ENCODE measurements at regions of chr2 and their contacts with region 1.

Region 1: DNA sequence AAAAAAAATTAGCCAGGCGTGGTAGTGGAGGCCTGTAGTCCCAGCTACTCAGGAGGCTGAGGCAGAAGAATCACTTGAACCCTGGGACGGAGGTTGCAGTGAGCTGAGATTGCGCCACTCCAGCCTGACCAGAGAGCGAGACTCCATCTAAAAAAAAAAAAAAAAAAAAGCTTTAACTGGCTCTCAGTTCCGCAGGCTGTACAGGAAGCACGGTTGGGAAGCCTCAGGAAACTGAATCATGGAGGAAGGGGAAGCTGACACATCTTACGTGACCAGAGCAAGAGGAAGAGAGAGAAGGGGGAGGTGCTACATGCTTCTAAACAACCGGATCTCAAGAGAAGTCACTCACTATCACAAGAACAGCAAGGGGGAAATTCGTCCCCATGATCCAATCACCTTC is 505.6 kb upstream of the SLC8A1 start:
- DNase-seq: peak; percentile 71
- ATAC-seq: peak; percentile 57
- H3K4me3 ChIP-seq: no peak overlapping the region
- H3K27ac ChIP-seq: peak overlapping the region; percentile 52
- H3K4me1 ChIP-seq: peaks cover 26% of the 10 kb centered on the region
- H3K27me3 ChIP-seq: no peaks in the 10 kb centered on the region
- CTCF ChIP-seq: no peak

Region 2: GRCh38 chr2:41142478-41142877 is 185.0 kb after region 1 on chr2:
- CTCF ChIA-PET with region 1: no interaction called
- POLR2A ChIA-PET with region 1: no interaction called
- intact Hi-C with region 1: loop called (anchors 5 kb)
- DNase-seq: no peak
- ATAC-seq: peak; percentile 5
- H3K4me3 ChIP-seq: no peak overlapping the region
- H3K27ac ChIP-seq: peak overlapping the region; percentile 55
- H3K4me1 ChIP-seq: peaks cover 17% of the 10 kb centered on the region
- H3K27me3 ChIP-seq: no peaks in the 10 kb centered on the region
- CTCF ChIP-seq: no peak

Region 3: DNA sequence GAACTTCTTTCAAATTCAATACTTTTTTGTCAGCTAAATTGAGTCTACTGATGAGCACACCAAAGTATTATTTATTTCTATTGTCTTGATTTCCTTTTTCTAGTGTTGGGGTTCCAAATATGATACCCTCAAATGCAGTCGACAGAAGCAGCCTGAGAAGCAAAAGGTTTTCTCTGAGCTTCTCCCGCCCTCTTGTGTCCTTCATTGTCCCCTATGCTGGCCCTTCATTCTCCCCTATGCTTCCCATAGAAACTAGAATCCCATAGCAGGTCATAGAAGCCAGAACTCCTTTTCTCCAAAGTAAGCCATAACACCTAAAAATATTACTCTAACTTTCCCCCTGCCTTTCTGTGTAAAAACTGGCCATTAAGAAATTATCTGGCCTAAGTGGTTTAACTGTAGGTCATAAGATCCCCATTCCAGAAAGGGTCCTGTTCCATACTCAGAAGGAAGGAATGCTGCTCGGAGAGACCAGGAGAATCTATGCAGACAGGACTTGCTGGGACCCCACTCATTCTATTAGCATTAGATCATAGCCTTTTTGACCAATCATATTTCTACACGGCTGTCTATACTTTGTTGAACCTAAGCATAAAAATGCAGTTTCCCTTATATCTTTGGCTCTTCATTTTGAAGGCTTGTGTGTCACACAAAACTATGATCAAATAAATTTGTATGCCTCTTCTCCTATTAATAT is 325.7 kb after region 1 on chr2:
- CTCF ChIA-PET with region 1: no interaction called
- POLR2A ChIA-PET with region 1: no interaction called
- intact Hi-C with region 1: loop called (anchors 5 kb)
- DNase-seq: peak; percentile 12
- ATAC-seq: no peak
- H3K4me3 ChIP-seq: no peak overlapping the region
- H3K27ac ChIP-seq: no peak overlapping the region
- H3K4me1 ChIP-seq: no peaks in the 10 kb centered on the region
- H3K27me3 ChIP-seq: no peaks in the 10 kb centered on the region
- CTCF ChIP-seq: peak; percentile 41; the same call in 1 of the 2 replicates

Region 4: DNA sequence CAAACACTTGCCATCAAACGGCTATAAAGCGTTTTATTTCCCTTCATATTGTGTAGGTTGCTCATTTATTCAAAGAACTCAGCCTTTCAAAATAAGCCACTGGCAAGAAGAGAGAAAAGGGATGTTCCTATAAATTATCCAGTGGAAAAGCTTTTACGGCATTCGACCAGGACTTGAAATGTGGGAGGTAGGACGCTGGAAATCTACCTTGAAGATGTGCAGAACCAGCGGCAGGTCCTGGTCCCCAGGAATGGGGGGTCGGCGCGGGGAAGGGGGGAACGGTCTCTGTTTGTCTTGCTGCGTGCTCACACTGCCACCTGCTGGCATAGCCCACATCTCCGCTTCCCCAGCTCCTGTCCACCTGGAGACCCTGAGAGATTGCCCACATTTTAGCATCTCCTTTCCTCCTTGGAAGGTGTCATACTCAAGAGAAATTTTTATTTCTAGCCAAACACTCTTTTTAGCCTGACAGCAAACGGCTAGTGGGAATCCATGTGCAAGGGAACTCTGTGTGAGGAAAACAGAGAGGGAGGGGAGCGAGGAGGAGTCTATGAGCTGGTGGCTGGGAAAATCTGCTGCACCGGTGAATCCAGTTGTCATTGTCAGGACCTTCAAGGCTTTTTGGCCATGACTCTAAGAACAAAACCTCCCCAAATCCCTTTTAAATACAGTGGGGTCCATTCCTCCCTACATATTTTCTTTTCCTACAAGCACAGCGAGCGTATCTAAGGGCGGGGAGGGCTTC is 741.3 kb after region 1 on chr2:
- CTCF ChIA-PET with region 1: no interaction called
- POLR2A ChIA-PET with region 1: no interaction called
- intact Hi-C with region 1: loop called (anchors 5 kb)
- DNase-seq: peak; percentile 20
- ATAC-seq: peak; percentile 61
- H3K4me3 ChIP-seq: no peak overlapping the region
- H3K27ac ChIP-seq: no peak overlapping the region
- H3K4me1 ChIP-seq: no peaks in the 10 kb centered on the region
- H3K27me3 ChIP-seq: peaks cover 26% of the 10 kb centered on the region; the same call in 1 of the 2 replicates
- CTCF ChIP-seq: peak; percentile 91

Measured in PC-3 (cell line).